ENCODE measurements at regions of chr15 and their contacts with region 1.

Region 1: GRCh38 chr15:74889883-74890664 is at the start of gene MPI:
- DNase-seq: peak; percentile 84 to 95 (median 90)
- H3K4me3 ChIP-seq: peak within 1 kb of the TSS; percentile 68 to 99 (median 93)
- H3K27ac ChIP-seq: peak within 1 kb of the TSS; percentile 54 to 94 (median 85)
- H3K27me3 ChIP-seq: no peaks in the 10 kb centered on the region
- CTCF ChIP-seq: peak in 50 of 56 donors; percentile 17 to 63 (median 44)
- total RNA-seq, gene MPI: 41.5 to 82.0 (median 64.4) TPM

Region 2: GRCh38 chr15:74781431-74782258 is 108.4 kb before region 1 on chr15 and contains the start of gene CSK:
- intact Hi-C with region 1: loop called in 1 of 2 experiments (anchors 5 kb)
- DNase-seq: peak in 5 of 10 donors; percentile 43 to 84 (median 46)
- H3K4me3 ChIP-seq: peak within 1 kb of the TSS; percentile 60 to 88 (median 73)
- H3K27ac ChIP-seq: peak within 1 kb of the TSS in 56 of 59 donors; percentile 15 to 89 (median 74)
- H3K27me3 ChIP-seq: no peaks in the 10 kb centered on the region
- CTCF ChIP-seq: peak in 55 of 56 donors; percentile 41 to 78 (median 62)
- total RNA-seq, gene CSK: 28.9 to 71.0 (median 41.8) TPM

Region 3: GRCh38 chr15:74873036-74873755 is 16.9 kb before region 1 on chr15 and contains the start of gene SCAMP2:
- intact Hi-C with region 1: loop called in 1 of 2 experiments (anchors 2 kb)
- DNase-seq: peak; percentile 87 to 97 (median 96)
- H3K4me3 ChIP-seq: peak within 1 kb of the TSS; percentile 67 to 100 (median 87)
- H3K27ac ChIP-seq: peak within 1 kb of the TSS; percentile 26 to 96 (median 88)
- H3K27me3 ChIP-seq: no peaks in the 10 kb centered on the region
- CTCF ChIP-seq: peak in 32 of 56 donors; percentile 6 to 55 (median 24)
- total RNA-seq, gene SCAMP2: 19.5 to 74.6 (median 41.4) TPM

Region 4: DNA sequence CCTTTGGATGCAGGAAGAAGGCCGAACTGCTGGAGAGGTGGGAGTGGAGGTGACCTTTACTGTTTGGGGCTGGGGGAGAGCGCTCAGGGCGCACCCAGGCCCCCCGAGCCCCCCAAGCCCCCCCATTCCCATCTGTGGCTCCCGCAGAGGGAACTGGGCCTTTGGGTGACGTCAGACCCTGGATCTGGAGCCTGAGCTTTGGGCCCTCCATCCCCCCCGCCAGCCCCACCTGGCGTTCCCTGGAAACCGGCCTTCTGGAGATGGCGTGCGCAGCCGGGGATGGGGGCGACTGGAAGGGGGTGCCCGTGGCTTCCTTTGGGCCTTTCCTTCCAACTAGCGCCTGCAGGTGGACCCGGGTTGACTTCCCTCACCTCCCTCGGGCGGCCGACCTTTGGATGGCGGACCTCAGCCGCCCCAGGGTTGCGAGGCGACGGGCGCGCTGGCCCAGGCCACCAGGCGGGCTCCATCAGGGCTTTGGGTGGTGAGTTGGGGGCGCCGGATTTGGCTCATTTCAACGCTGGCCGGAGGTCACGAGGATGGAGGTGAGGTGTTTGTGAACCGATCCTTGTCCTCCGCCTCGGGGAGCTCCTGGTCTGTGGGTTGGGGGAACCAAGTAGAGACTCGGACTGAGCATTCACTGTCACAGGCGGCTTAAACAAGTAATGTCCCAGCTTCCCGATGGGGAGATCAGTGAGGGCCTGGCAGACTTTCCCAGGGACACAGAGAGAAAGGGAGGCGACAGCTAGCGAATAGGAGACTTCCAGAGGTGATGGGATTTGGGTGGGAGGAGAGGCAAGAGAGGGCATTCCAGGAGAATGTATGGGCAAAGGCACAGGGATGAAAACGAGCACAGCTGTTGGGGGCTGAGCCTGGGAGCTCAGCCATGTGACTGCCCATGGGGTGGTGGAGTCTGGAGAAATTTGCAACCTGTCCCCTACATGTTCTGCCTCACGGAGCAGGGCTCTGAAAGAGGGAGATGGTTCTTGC is 106.0 kb after region 1 on chr15:
- intact Hi-C with region 1: no loop called
- DNase-seq: peak; percentile 32 to 85 (median 70)
- H3K4me3 ChIP-seq: peak overlapping the region; percentile 54 to 97 (median 87)
- H3K27ac ChIP-seq: peak overlapping the region; percentile 45 to 96 (median 90)
- H3K27me3 ChIP-seq: no peaks in the 10 kb centered on the region
- CTCF ChIP-seq: no peak

Measured in dorsolateral prefrontal cortex (tissue), 120 donors.